H1 (cell line): ENCODE measurements at regions of chr20 and their contacts with region 1.

Region 1: DNA sequence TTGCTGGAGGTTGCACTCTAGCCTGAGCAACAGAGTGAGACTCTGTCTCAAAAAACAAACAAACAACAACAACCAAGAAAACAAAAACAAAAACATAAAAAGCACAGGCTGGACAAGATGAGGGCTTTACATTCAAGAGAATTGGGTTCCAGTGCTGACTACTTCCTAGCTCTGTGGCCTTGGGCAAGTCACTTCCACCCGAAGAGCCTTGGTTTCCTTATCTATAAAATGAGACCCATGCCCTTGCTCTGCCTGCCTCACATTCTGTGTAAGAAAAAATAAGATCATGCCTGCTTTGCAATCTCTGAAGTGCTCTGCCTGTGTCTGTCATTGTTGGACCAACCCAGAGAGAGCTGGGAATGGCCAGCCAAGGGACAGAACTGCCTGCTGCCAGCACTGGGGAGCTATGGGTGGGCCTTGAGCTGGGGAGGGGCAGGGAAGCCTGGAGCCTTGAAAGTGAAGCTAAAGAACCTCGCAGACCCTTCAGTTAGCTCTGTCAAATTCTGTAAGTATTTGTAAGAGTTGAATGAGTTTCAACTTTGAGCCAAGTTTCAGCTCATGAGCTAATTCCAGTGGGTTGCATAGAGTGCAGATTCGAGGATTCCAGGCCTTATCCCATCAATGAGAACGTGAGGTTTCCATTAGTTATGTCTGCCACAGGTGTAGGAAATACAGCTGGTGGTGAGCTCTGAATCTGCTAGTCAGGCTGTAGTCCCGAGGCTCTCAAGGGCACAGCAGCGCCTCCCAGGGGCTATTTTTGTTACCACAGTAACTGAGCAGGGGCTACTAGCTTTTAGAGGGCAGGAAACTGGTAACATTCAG is 93.2 kb downstream of the DLGAP4 start:
- DNase-seq: peak; percentile 78 to 97
- H3K4me3 ChIP-seq: no peak overlapping the region
- H3K27ac ChIP-seq: no peak overlapping the region
- H3K4me1 ChIP-seq: peaks cover 0 to 6% (median 3%) of the 10 kb centered on the region in 4 experiments; a peak in 4 of 7 replicates
- H3K27me3 ChIP-seq: no peaks in the 10 kb centered on the region
- CTCF ChIP-seq: peak; percentile 75 to 97 (median 91)
- EP300 ChIP-seq: peak in 1 of 2 experiments; percentile 52; a peak in 1 of 3 replicates
- POLR2A ChIP-seq: no peak
- RAD21 ChIP-seq: peak; percentile 89 to 95

Region 2: GRCh38 chr20:36214684-36215256 is 184.6 kb before region 1 on chr20:
- CTCF ChIA-PET with region 1: interaction called, 13 read pairs
- POLR2A ChIA-PET with region 1: interaction called, 3 read pairs
- DNase-seq: no peak
- H3K4me3 ChIP-seq: no peak overlapping the region
- H3K27ac ChIP-seq: no peak overlapping the region
- H3K4me1 ChIP-seq: no peaks in the 10 kb centered on the region
- H3K27me3 ChIP-seq: peaks cover 0 to 2% (median 0%) of the 10 kb centered on the region in 4 experiments; a peak in 1 of 7 replicates
- CTCF ChIP-seq: peak; percentile 82 to 94 (median 84)
- EP300 ChIP-seq: no peak
- POLR2A ChIP-seq: no peak
- RAD21 ChIP-seq: peak; percentile 87 to 93

Region 3: GRCh38 chr20:36279362-36279761 is 120.0 kb before region 1 on chr20:
- CTCF ChIA-PET with region 1: interaction called, 38 read pairs
- POLR2A ChIA-PET with region 1: no interaction called
- DNase-seq: no peak
- H3K4me3 ChIP-seq: no peak overlapping the region
- H3K27ac ChIP-seq: no peak overlapping the region
- H3K4me1 ChIP-seq: no peaks in the 10 kb centered on the region; a peak in 1 of 7 replicates
- H3K27me3 ChIP-seq: no peaks in the 10 kb centered on the region
- CTCF ChIP-seq: no peak
- EP300 ChIP-seq: no peak
- POLR2A ChIP-seq: no peak
- RAD21 ChIP-seq: no peak

Region 4: DNA sequence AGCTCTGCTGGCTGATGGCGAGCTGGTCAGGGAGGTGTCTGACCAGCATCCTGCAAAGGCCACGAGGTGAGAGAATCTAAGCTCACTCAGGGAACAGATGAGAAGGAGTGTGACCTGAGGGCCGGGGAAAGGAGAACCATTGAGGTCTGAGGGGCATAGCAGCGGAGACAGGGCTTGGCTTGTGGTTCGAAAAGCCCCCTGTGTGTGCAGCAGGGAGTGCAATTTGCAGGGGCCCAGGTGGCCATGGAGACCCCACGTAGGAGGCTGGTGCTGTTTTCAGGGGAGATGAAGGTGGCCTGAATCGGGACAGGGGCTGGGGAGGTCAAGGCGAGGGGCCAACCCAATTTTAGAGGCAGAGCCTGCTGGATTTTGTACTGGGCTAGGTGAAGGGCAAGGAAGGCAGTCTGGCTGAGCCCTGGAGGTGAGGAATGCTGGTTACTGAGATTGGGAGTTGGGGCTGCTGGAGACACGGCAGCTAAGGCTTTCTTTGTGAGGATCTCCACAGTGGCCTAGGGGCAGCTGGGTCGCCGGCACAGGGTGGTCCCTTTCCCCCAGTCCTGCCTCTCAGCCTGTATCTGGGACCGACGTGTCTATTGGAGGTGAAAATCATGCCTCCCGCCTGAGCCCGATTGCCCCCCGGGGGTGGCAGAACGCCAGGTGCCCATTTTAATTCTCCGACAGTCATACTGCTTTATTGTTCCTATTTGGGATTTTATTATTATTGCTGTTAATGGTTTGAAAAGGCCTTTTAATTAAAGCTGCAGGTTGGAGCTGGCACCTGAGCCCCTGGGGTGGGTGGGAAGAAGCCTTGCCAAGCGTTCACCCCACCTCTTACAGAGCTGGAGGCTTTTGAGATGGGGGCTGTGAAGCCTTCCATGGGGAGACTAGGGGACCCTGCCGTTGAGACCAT is 64.8 kb before region 1 on chr20:
- CTCF ChIA-PET with region 1: interaction called, 14 read pairs
- POLR2A ChIA-PET with region 1: no interaction called
- DNase-seq: no peak
- H3K4me3 ChIP-seq: no peak overlapping the region
- H3K27ac ChIP-seq: no peak overlapping the region
- H3K4me1 ChIP-seq: peaks cover 6 to 22% (median 11%) of the 10 kb centered on the region in 4 experiments
- H3K27me3 ChIP-seq: peaks cover 2 to 33% (median 30%) of the 10 kb centered on the region in 4 experiments; a peak in 6 of 7 replicates
- CTCF ChIP-seq: no peak
- EP300 ChIP-seq: no peak
- POLR2A ChIP-seq: no peak
- RAD21 ChIP-seq: no peak

Region 5: DNA sequence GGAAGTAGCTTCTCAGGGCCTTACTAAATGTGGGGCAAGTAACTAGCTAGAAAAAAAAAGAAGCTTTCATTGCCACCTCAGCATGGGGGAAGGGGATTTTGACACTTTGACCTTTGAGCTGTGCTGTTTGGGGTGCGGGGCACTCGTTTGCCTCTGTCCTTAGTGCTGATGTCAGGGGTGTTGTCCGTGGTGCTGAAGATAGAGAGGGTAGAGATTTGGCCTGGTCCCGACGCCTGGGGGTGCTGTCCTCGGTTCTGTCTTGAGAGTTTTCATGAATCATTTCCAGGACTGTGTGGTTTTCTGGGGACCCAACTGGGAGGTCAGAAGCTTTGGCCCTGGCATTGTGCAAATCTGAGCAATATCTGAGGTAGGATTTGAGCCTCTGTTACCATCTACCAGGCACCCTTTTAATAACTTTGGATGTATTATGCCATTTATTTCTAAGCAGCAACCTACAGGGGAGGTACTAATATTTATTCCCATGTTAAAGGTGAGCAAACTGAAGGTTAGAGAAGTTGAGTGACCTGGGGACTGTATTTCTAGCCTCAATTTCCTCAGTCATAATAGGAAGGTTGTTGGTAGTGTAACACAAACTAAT is 15.2 kb before region 1 on chr20:
- CTCF ChIA-PET with region 1: interaction called, 42 read pairs
- POLR2A ChIA-PET with region 1: no interaction called
- DNase-seq: peak; percentile 63 to 90
- H3K4me3 ChIP-seq: no peak overlapping the region
- H3K27ac ChIP-seq: no peak overlapping the region
- H3K4me1 ChIP-seq: no peaks in the 10 kb centered on the region
- H3K27me3 ChIP-seq: no peaks in the 10 kb centered on the region
- CTCF ChIP-seq: peak; percentile 40 to 73 (median 60)
- EP300 ChIP-seq: peak in 1 of 2 experiments; percentile 49; a peak in 1 of 3 replicates
- POLR2A ChIP-seq: no peak
- RAD21 ChIP-seq: peak in 1 of 2 experiments; percentile 50; a peak in 2 of 4 replicates

Region 6: DNA sequence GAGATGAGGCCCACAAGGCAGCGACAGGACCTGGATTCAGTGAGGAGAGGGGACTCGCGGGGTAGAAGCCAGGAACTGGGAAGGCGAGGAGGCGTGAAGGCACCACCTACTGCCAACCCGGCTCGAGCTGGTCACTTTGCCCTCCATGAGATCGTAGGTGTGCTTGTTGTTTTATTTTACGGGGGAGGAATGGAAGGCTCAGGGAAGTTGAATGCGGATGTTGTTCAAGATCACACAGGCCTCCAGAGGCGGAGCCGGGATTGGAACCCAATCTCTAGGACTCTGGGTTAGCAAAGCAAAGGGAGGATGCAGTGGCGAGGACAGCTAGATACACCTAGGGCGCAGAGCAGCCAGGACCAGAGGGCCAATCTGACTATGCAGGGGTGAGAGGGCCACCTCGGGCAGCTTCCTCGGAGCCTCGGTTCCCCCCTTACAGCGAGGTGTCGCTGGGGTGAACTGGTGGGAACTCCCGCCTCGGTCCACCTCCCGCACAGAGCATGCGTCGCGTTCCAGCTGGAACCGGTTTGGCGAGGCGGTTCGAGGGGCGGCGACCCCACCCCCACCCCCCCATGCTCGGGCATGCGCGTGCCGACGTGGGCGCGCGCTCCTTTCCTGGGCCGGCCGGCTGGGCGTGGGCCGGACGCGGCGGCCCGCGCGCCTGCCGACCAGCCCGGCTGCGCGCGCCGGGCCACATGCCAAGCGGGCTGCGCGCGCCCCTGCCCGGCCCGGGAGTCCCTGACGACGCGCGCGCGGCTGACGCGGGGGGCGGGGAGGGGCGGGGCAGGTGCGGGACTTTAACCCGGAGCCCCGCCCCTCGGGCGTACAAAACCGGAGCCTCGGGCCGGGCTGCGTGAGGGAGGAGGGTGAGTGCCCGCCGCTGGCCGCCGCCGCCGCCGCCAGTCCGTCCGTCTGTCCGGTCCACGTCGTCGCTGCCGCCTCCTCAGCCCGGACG is 61.6 kb after region 1 on chr20:
- CTCF ChIA-PET with region 1: no interaction called
- POLR2A ChIA-PET with region 1: no interaction called
- DNase-seq: peak; percentile 78 to 88
- H3K4me3 ChIP-seq: peak overlapping the region in 3 of 4 experiments; percentile 17 to 75 (median 44); a peak in 4 of 8 replicates
- H3K27ac ChIP-seq: peak overlapping the region; percentile 74
- H3K4me1 ChIP-seq: peaks cover 11 to 28% (median 15%) of the 10 kb centered on the region in 4 experiments
- H3K27me3 ChIP-seq: no peaks in the 10 kb centered on the region; a peak in 1 of 7 replicates
- CTCF ChIP-seq: no peak
- EP300 ChIP-seq: no peak; a peak in 1 of 3 replicates
- POLR2A ChIP-seq: peak; percentile 41 to 89
- RAD21 ChIP-seq: no peak

Region 7: GRCh38 chr20:36562724-36563123 is 163.4 kb after region 1 on chr20:
- CTCF ChIA-PET with region 1: no interaction called
- POLR2A ChIA-PET with region 1: no interaction called
- DNase-seq: no peak
- H3K4me3 ChIP-seq: no peak overlapping the region; a peak in 2 of 8 replicates
- H3K27ac ChIP-seq: no peak overlapping the region
- H3K4me1 ChIP-seq: peaks cover 6 to 9% (median 8%) of the 10 kb centered on the region in 4 experiments
- H3K27me3 ChIP-seq: no peaks in the 10 kb centered on the region
- CTCF ChIP-seq: no peak
- EP300 ChIP-seq: no peak
- POLR2A ChIP-seq: no peak
- RAD21 ChIP-seq: no peak